Ascending aorta (tissue), 2 donors: ENCODE measurements at regions of chr14 and their contacts with region 1.

Region 1: GRCh38 chr14:104677512-104678332 is 11.7 kb upstream of the INF2 start:
- DNase-seq: peak in 1 of 2 donors; percentile 88
- H3K4me3 ChIP-seq: peak overlapping the region; percentile 53 to 67
- H3K27ac ChIP-seq: peak overlapping the region; percentile 88 to 89
- H3K4me1 ChIP-seq: peaks cover 44 to 52% of the 10 kb centered on the region in 2 donors
- H3K27me3 ChIP-seq: no peaks in the 10 kb centered on the region
- CTCF ChIP-seq: no peak

Region 2: GRCh38 chr14:103920981-103921854 is 756.5 kb before region 1 on chr14:
- intact Hi-C with region 1: loop called (anchors 2 kb)
- DNase-seq: peak; percentile 67 to 94
- H3K4me3 ChIP-seq: peak overlapping the region; percentile 65 to 84
- H3K27ac ChIP-seq: peak overlapping the region; percentile 58 to 59
- H3K4me1 ChIP-seq: peaks cover 6 to 7% of the 10 kb centered on the region in 2 donors
- H3K27me3 ChIP-seq: no peaks in the 10 kb centered on the region
- CTCF ChIP-seq: peak; percentile 97 to 98 (median 97)

Region 3: GRCh38 chr14:104650057-104650981 is 27.4 kb before region 1 on chr14:
- intact Hi-C with region 1: loop called (anchors 2 kb)
- DNase-seq: peak in 1 of 2 donors; percentile 79
- H3K4me3 ChIP-seq: peak overlapping the region; percentile 51 to 64
- H3K27ac ChIP-seq: no peak overlapping the region
- H3K4me1 ChIP-seq: peaks cover 1 to 4% of the 10 kb centered on the region in 2 donors
- H3K27me3 ChIP-seq: no peaks in the 10 kb centered on the region
- CTCF ChIP-seq: peak; percentile 86 to 99 (median 98)

Region 4: GRCh38 chr14:104689109-104689880 is 11.6 kb after region 1 on chr14 and contains the start of gene INF2:
- intact Hi-C with region 1: loop called (anchors 1 kb)
- DNase-seq: no peak
- H3K4me3 ChIP-seq: peak within 1 kb of the TSS; percentile 90 to 92
- H3K27ac ChIP-seq: peak within 1 kb of the TSS; percentile 80 to 82
- H3K4me1 ChIP-seq: peaks cover 17 to 39% of the 10 kb centered on the region in 2 donors
- H3K27me3 ChIP-seq: no peaks in the 10 kb centered on the region
- CTCF ChIP-seq: no peak
- total RNA-seq, gene INF2: 249 TPM

Region 5: DNA sequence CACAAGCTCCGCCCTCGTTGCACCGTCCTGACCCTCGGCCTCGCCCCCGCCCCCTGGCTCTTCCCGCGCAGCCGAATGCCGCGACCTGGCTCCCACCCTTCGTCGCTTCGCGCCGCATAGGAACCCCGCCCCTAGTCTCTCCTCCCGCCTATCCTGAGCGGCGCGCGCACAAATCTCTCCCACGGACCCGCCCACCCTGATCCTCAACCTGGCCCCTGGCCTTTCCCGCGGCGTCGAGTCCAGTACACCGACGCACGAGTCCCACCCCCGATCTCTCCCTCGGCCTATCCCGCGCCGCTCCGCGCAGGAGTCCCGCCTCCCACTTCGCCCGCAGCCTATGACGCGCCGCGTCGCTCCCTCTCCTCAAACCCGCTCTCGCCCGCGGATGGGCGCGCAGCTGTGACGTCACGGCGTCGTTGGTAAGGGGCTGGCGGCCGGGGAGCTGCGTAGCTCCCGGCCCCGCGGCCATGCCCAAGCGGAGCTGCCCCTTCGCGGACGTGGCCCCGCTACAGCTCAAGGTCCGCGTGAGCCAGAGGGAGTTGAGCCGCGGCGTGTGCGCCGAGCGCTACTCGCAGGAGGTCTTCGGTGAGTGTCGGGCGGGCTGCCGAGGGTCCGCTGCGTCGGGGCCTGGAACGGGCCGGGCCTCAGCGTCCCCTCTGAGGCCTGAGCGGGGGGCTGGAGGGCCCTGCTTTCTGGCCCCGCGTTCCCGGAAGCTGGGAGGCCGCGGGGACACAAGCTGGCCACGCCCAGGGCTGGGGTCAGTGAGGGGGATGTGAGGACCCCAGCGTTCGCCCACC is 75.2 kb after region 1 on chr14 and contains the start of gene SIVA1:
- intact Hi-C with region 1: loop called (anchors 2 kb)
- DNase-seq: peak; percentile 98 to 100
- H3K4me3 ChIP-seq: peak within 1 kb of the TSS; percentile 89 to 99
- H3K27ac ChIP-seq: peak within 1 kb of the TSS; percentile 81 to 95
- H3K4me1 ChIP-seq: peaks cover 40 to 55% of the 10 kb centered on the region in 2 donors
- H3K27me3 ChIP-seq: no peaks in the 10 kb centered on the region
- CTCF ChIP-seq: no peak
- total RNA-seq, gene SIVA1: 410 TPM

Region 6: DNA sequence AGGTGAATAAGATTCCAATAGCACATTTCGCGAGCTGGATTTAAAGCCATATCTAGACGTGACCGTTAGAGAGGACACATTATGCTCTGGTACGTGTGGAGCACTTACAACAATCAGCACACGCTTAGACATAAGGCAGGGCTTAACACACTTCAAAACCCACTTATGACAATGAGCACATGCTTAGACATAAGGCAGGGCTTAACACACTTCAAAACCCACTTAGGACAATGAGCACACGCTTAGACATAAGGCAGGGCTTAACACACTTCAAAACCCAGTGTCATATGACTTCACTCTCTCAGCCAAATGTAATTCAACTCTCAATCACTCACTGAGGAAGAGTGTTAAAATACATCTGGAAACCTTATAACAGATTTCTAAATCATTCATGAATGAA is 235.7 kb after region 1 on chr14:
- intact Hi-C with region 1: no loop called
- DNase-seq: no peak
- H3K4me3 ChIP-seq: no peak overlapping the region
- H3K27ac ChIP-seq: no peak overlapping the region
- H3K4me1 ChIP-seq: no peaks in the 10 kb centered on the region
- H3K27me3 ChIP-seq: no peaks in the 10 kb centered on the region
- CTCF ChIP-seq: no peak

Region 7: DNA sequence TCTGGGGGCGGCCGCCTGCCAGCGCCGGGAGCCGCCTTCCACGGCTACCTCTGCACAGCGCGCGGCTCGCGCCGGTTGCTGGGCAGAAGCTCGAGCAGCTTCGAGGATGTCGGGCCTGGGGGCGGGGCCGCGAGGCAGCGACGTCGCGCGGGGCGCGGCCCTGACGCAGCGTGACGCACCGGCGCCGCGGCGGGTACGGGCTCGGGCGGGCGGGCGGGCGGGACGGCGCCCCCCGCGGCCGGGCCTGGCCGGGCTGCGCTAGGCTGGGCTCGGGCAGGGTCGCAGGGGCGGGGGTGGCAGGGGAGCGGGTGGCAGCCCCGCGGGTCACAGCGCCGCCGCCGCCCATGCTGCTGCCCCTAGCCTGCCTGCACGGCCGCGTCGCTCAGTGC is 570.6 kb after region 1 on chr14 and contains the start of gene BTBD6:
- intact Hi-C with region 1: loop called (anchors 10 kb)
- DNase-seq: peak; percentile 37 to 91
- H3K4me3 ChIP-seq: peak within 1 kb of the TSS; percentile 72
- H3K27ac ChIP-seq: peak within 1 kb of the TSS; percentile 84 to 88
- H3K4me1 ChIP-seq: peaks cover 4 to 17% of the 10 kb centered on the region in 2 donors
- H3K27me3 ChIP-seq: no peaks in the 10 kb centered on the region
- CTCF ChIP-seq: no peak
- total RNA-seq, gene BTBD6: 80.1 TPM